Upper lobe of right lung (tissue), 1 donor: ENCODE measurements at regions of chr13 and their contacts with region 1.

Region 1: DNA sequence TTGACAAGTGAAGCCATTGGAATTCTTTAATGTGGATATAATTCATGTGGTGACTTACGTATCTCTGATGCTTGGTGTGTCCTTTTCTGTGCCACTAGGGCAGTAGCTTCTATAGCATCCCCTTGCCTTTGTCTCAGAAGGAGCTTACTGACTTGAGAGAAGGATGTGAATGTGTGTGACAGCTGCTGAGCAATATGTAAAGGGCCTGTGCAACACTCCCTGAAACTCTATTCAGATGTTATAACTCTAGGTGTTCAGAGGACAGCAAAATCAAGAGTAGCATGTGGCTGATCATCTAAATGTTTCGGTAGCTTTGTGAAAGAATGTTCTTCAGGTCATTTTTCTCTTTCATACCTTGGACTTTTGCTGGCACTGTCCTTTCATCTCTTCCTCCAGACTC is 189.5 kb downstream of the LMO7 start:
- DNase-seq: no peak
- ATAC-seq: no peak
- H3K4me3 ChIP-seq: no peak overlapping the region
- H3K27ac ChIP-seq: no peak overlapping the region
- H3K4me1 ChIP-seq: no peaks in the 10 kb centered on the region
- H3K27me3 ChIP-seq: no peaks in the 10 kb centered on the region
- CTCF ChIP-seq: no peak

Region 2: DNA sequence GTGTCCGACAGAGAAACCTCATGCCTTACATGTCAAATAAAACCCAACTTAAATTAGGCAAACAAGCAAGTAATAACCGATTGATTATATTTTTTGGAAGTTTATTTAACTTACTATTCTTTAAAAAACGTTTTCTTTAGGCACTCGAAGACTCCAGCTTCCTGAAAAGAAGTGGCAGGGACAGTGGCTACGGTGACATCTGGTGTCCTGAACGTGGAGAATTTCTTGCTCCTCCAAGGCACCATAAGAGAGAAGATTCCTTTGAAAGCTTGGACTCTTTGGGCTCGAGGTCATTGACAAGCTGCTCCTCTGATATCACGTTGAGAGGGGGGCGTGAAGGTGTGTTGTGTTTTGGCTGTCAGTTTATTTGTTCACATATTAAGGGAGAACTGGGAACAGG is 25.1 kb before region 1 on chr13:
- intact Hi-C with region 1: loop called (anchors 2 kb)
- DNase-seq: no peak
- ATAC-seq: no peak
- H3K4me3 ChIP-seq: no peak overlapping the region
- H3K27ac ChIP-seq: no peak overlapping the region
- H3K4me1 ChIP-seq: peaks cover 7% of the 10 kb centered on the region
- H3K27me3 ChIP-seq: no peaks in the 10 kb centered on the region
- CTCF ChIP-seq: no peak